Caco-2 (cell line): ENCODE measurements at regions of chr10 and their contacts with region 1.

Region 1: DNA sequence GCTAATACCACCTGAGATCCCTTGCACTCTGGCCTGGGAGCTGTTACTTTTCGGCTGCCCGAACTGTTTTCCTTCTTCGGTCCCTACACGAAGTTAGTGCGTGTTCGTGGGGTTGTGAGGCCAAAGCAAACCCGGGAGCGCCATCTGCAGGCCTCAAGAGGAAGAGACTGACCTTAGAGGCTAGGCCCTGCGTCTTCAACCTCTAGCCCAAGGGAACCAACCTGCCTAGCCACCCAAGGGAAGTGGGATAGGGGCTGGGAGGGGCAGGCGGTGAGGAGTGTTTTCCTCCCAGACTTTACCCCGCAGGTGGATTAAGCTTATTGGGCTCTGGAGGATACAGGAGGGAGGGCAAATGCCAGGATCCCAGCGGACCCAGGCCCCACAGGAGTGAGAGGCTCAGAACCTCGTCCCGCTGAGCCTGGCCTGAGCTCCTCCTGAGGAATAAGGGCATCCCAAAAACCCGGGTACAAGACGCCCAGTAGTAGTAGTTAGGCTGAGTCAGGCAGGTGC is 1.7 kb upstream of the PAX2 start:
- DNase-seq: peak; percentile 67 to 68
- H3K4me3 ChIP-seq: peak overlapping the region; percentile 39; the same call in 1 of the 2 replicates
- H3K4me3 Mint-ChIP-seq: peak overlapping the region; percentile 75
- H3K27ac Mint-ChIP-seq: no peak overlapping the region
- H3K4me1 ChIP-seq: peaks cover 31% of the 10 kb centered on the region
- H3K4me1 Mint-ChIP-seq: peaks cover 19% of the 10 kb centered on the region
- H3K27me3 ChIP-seq: peaks cover 6% of the 10 kb centered on the region
- H3K27me3 Mint-ChIP-seq: peaks cover 20% of the 10 kb centered on the region
- CTCF ChIP-seq: peak; percentile 81 to 85

Region 2: DNA sequence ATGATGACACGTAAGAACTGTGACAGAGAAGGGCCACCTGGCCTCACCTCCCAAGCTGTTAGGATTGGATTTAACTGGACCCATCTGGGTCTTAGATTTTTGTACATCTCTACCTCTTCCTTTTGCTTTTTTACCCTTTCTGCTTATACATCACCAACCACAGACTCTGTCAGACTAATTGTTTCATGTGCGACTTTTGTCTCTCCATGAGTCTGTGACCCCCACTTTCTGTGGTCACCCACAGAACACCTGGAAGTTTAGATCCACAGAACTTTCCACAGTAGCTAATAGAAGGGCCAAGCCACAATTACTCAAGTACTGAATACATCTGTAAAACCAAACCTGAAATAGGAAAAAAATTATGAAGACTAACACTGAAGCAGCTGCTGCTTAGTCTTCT is 247.1 kb before region 1 on chr10:
- CTCF ChIA-PET with region 1: no interaction called
- POLR2A ChIA-PET with region 1: no interaction called
- intact Hi-C with region 1: no loop called
- DNase-seq: no peak
- H3K4me3 ChIP-seq: no peak overlapping the region
- H3K4me3 Mint-ChIP-seq: no peak overlapping the region
- H3K27ac Mint-ChIP-seq: no peak overlapping the region
- H3K4me1 ChIP-seq: no peaks in the 10 kb centered on the region
- H3K4me1 Mint-ChIP-seq: no peaks in the 10 kb centered on the region
- H3K27me3 ChIP-seq: no peaks in the 10 kb centered on the region
- H3K27me3 Mint-ChIP-seq: no peaks in the 10 kb centered on the region
- CTCF ChIP-seq: no peak

Region 3: GRCh38 chr10:100535715-100536353 is 207.8 kb before region 1 on chr10 and contains the start of gene HIF1AN:
- CTCF ChIA-PET with region 1: interaction called, 12 read pairs
- POLR2A ChIA-PET with region 1: no interaction called
- intact Hi-C with region 1: no loop called
- DNase-seq: peak; percentile 93 to 94
- H3K4me3 ChIP-seq: peak within 1 kb of the TSS; percentile 62
- H3K4me3 Mint-ChIP-seq: peak within 1 kb of the TSS; percentile 29
- H3K27ac Mint-ChIP-seq: no peak within 1 kb of the TSS
- H3K4me1 ChIP-seq: no peaks in the 10 kb centered on the region; the same call in 1 of the 2 replicates
- H3K4me1 Mint-ChIP-seq: no peaks in the 10 kb centered on the region
- H3K27me3 ChIP-seq: no peaks in the 10 kb centered on the region
- H3K27me3 Mint-ChIP-seq: no peaks in the 10 kb centered on the region
- CTCF ChIP-seq: peak; percentile 85 to 97
- total RNA-seq, gene HIF1AN: 71.2 and 72.5 TPM in 2 replicates

Region 4: GRCh38 chr10:100562008-100562711 is 181.5 kb before region 1 on chr10:
- CTCF ChIA-PET with region 1: interaction called, 30 read pairs
- POLR2A ChIA-PET with region 1: interaction called, 5 read pairs
- intact Hi-C with region 1: loop called (anchors 1 kb)
- DNase-seq: peak; percentile 83 to 92
- H3K4me3 ChIP-seq: peak overlapping the region; percentile 6; the same call in 1 of the 2 replicates
- H3K4me3 Mint-ChIP-seq: peak overlapping the region; percentile 12
- H3K27ac Mint-ChIP-seq: no peak overlapping the region
- H3K4me1 ChIP-seq: peaks cover 11% of the 10 kb centered on the region
- H3K4me1 Mint-ChIP-seq: peaks cover 6% of the 10 kb centered on the region
- H3K27me3 ChIP-seq: no peaks in the 10 kb centered on the region
- H3K27me3 Mint-ChIP-seq: peaks cover 5% of the 10 kb centered on the region
- CTCF ChIP-seq: peak; percentile 97 to 100

Region 5: DNA sequence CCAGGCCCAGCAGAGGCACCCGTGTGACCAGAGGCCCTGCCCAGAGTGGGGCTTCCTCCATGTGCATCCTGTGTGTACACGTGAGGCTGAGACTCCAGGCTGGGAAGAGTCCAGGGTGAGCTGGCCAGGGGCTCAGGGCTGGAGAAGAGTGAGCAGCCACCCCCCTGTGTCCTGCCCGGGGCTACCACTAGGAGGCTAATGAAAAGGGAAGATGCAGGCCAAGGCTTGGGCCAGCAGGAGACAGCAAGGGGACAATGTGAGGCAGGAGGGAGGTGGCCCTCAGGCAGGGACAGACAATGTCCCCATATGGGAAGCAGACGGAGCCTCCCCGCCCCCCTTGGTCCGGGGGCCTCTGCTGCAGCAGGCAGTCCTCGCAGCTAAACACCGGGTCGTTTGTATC is 105.9 kb before region 1 on chr10:
- CTCF ChIA-PET with region 1: interaction called, 13 read pairs
- POLR2A ChIA-PET with region 1: no interaction called
- intact Hi-C with region 1: no loop called
- DNase-seq: peak; percentile 51 to 57
- H3K4me3 ChIP-seq: no peak overlapping the region
- H3K4me3 Mint-ChIP-seq: no peak overlapping the region
- H3K27ac Mint-ChIP-seq: no peak overlapping the region
- H3K4me1 ChIP-seq: no peaks in the 10 kb centered on the region
- H3K4me1 Mint-ChIP-seq: no peaks in the 10 kb centered on the region
- H3K27me3 ChIP-seq: no peaks in the 10 kb centered on the region; the same call in 1 of the 2 replicates
- H3K27me3 Mint-ChIP-seq: peaks cover 6% of the 10 kb centered on the region
- CTCF ChIP-seq: peak; percentile 43 to 81

Region 6: GRCh38 chr10:100670828-100671479 is 72.7 kb before region 1 on chr10:
- CTCF ChIA-PET with region 1: interaction called, 4 read pairs
- POLR2A ChIA-PET with region 1: no interaction called
- intact Hi-C with region 1: loop called (anchors 1 kb)
- DNase-seq: peak in 1 of 2 experiments; percentile 77
- H3K4me3 ChIP-seq: peak overlapping the region; percentile 24
- H3K4me3 Mint-ChIP-seq: peak overlapping the region; percentile 54
- H3K27ac Mint-ChIP-seq: no peak overlapping the region
- H3K4me1 ChIP-seq: 0 out of 2 replicates have a peak, but pooled peaks cover 8% of the 10 kb centered on the region
- H3K4me1 Mint-ChIP-seq: no peaks in the 10 kb centered on the region
- H3K27me3 ChIP-seq: no peaks in the 10 kb centered on the region; the same call in 1 of the 2 replicates
- H3K27me3 Mint-ChIP-seq: peaks cover 29% of the 10 kb centered on the region
- CTCF ChIP-seq: peak; percentile 51 to 94

Region 7: GRCh38 chr10:100728928-100729861 is 14.5 kb before region 1 on chr10:
- CTCF ChIA-PET with region 1: interaction called, 10 read pairs
- POLR2A ChIA-PET with region 1: no interaction called
- intact Hi-C with region 1: loop called (anchors 1 kb)
- DNase-seq: peak; percentile 83 to 86
- H3K4me3 ChIP-seq: peak overlapping the region; percentile 48
- H3K4me3 Mint-ChIP-seq: peak overlapping the region; percentile 79
- H3K27ac Mint-ChIP-seq: no peak overlapping the region
- H3K4me1 ChIP-seq: peaks cover 32% of the 10 kb centered on the region
- H3K4me1 Mint-ChIP-seq: peaks cover 28% of the 10 kb centered on the region
- H3K27me3 ChIP-seq: no peaks in the 10 kb centered on the region
- H3K27me3 Mint-ChIP-seq: peaks cover 3% of the 10 kb centered on the region
- CTCF ChIP-seq: peak; percentile 60 to 85

Region 8: GRCh38 chr10:100827819-100828737 is 84.4 kb after region 1 on chr10:
- CTCF ChIA-PET with region 1: interaction called, 8 read pairs
- POLR2A ChIA-PET with region 1: no interaction called
- intact Hi-C with region 1: loop called (anchors 2 kb)
- DNase-seq: peak; percentile 61 to 79
- H3K4me3 ChIP-seq: peak overlapping the region; percentile 77
- H3K4me3 Mint-ChIP-seq: peak overlapping the region; percentile 80
- H3K27ac Mint-ChIP-seq: no peak overlapping the region
- H3K4me1 ChIP-seq: peaks cover 10% of the 10 kb centered on the region; the same call in 1 of the 2 replicates
- H3K4me1 Mint-ChIP-seq: peaks cover 10% of the 10 kb centered on the region
- H3K27me3 ChIP-seq: peaks cover 5% of the 10 kb centered on the region; the same call in 1 of the 2 replicates
- H3K27me3 Mint-ChIP-seq: peaks cover 33% of the 10 kb centered on the region
- CTCF ChIP-seq: peak in 1 of 2 experiments; percentile 57